ENCODE measurements at regions of chr14 and their contacts with region 1.

Region 1: GRCh38 chr14:97724265-97724731 is 927.1 kb downstream of the VRK1 start:
- DNase-seq: no peak
- ATAC-seq: peak; percentile 56
- H3K4me3 ChIP-seq: no peak overlapping the region
- H3K27ac ChIP-seq: no peak overlapping the region
- H3K4me1 ChIP-seq: no peaks in the 10 kb centered on the region
- H3K27me3 ChIP-seq: no peaks in the 10 kb centered on the region
- CTCF ChIP-seq: no peak
- EP300 ChIP-seq: no peak
- POLR2A ChIP-seq: no peak
- RAD21 ChIP-seq: no peak

Region 2: GRCh38 chr14:97978341-97978740 is 254.0 kb after region 1 on chr14:
- CTCF ChIA-PET with region 1: no interaction called
- POLR2A ChIA-PET with region 1: no interaction called
- RAD21 ChIA-PET with region 1: no interaction called
- SMC1A ChIA-PET with region 1: no interaction called
- in situ Hi-C with region 1: no loop called
- intact Hi-C with region 1: loop called (anchors 10 kb)
- DNase-seq: no peak
- ATAC-seq: peak; percentile 58
- H3K4me3 ChIP-seq: no peak overlapping the region
- H3K27ac ChIP-seq: no peak overlapping the region
- H3K4me1 ChIP-seq: no peaks in the 10 kb centered on the region
- H3K27me3 ChIP-seq: no peaks in the 10 kb centered on the region
- CTCF ChIP-seq: no peak; a peak in 2 of 6 replicates
- EP300 ChIP-seq: no peak
- POLR2A ChIP-seq: no peak
- RAD21 ChIP-seq: peak; percentile 41; the same call in 1 of the 2 replicates

Measured in GM12878 (cell line).